Calu3 (cell line): ENCODE measurements at regions of chr11 and their contacts with region 1.

Region 1: GRCh38 chr11:62372871-62373270 is 35.6 kb downstream of the ASRGL1 start:
- DNase-seq: no peak
- H3K4me3 Mint-ChIP-seq: no peak overlapping the region
- H3K27ac Mint-ChIP-seq: no peak overlapping the region
- H3K4me1 Mint-ChIP-seq: no peaks in the 10 kb centered on the region
- H3K27me3 Mint-ChIP-seq: no peaks in the 10 kb centered on the region
- CTCF ChIP-seq: no peak

Region 2: DNA sequence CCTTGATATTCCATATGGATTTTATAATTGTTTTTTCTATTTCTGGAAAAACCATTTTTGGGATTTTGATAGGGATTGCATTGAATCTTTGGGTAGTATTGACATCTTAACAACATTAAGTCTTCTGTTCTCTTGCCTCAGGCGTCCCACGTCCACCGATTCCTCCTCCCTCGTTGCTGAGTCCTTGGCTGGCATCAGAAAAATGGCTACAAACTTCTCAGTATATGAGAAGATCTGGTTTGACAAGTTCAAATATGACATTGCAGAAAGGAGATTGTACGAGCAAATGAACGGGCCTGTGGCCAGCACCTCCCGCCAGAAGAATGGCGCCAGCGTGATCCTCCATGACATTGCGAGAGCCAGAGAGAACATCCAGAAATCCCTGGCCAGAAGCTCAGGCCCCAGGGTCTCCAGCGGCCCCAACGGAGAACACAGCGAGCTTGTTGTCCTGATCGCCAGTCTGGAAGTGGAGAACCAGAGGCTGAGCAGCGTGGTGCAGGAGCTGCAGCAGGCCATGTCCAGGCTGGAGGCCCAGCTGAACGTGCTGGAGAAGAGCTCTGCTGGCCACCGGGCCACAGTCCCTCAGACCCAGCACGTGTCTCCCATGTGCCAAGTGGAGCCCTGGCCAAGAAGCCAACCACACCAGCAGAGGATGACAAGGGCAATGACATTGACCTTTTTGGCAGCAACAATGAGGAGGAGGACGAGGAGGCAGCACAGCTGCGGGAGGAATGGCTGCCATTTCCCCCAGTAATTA is 203.6 kb before region 1 on chr11:
- CTCF ChIA-PET with region 1: no interaction called
- intact Hi-C with region 1: loop called (anchors 1 kb)
- DNase-seq: no peak
- H3K4me3 Mint-ChIP-seq: no peak overlapping the region
- H3K27ac Mint-ChIP-seq: no peak overlapping the region
- H3K4me1 Mint-ChIP-seq: peaks cover 13% of the 10 kb centered on the region
- H3K27me3 Mint-ChIP-seq: peaks cover 95% of the 10 kb centered on the region
- CTCF ChIP-seq: no peak

Region 3: DNA sequence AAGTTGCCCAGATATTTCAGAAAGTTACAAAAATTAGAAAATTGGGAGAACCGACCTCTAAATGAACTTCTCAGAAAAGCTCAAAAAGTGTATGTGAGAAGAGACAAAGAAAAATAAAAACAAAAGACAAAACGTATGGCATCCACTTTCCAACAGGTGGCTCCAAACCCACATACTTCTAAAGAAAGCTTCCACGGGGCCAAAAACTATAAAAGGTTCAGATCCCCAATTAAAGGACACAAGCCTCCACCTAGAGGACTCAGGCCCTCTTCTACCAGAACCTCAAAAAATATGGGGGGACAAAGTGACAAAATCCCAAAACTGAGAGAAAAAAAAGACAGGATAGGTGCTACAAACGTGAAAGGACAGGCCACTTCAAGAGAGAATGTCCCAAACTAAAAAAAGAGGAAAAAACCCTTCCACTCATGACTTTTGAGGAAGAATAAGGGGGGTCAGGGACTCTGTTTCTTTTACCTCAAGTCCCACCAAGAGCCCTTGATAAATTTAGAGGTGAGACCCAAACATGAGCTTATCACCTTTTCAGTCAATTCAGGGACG is 155.6 kb before region 1 on chr11:
- CTCF ChIA-PET with region 1: no interaction called
- intact Hi-C with region 1: loop called (anchors 2 kb)
- DNase-seq: peak; percentile 5
- H3K4me3 Mint-ChIP-seq: no peak overlapping the region
- H3K27ac Mint-ChIP-seq: no peak overlapping the region
- H3K4me1 Mint-ChIP-seq: no peaks in the 10 kb centered on the region
- H3K27me3 Mint-ChIP-seq: peaks cover 35% of the 10 kb centered on the region
- CTCF ChIP-seq: peak; percentile 42

Region 4: DNA sequence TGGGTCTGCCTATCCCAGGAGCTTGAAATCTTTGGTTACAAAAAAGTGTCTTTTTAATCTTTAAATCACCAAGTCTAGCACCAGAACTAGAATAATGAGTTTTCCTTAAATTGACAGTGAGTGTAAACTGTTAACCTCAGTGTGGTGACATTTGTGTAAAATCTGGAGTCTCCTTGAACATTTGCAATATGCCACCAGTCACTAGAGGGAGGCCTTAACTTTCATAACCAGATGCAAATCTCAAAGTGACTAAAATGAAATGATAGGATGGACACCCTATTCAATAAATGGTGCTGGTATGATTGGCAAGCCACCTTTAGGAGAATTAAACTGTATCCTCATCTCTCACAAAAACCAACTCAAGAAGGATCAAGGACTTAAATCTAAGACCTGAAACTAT is 139.1 kb before region 1 on chr11:
- CTCF ChIA-PET with region 1: no interaction called
- intact Hi-C with region 1: loop called (anchors 5 kb)
- DNase-seq: no peak
- H3K4me3 Mint-ChIP-seq: no peak overlapping the region
- H3K27ac Mint-ChIP-seq: no peak overlapping the region
- H3K4me1 Mint-ChIP-seq: no peaks in the 10 kb centered on the region
- H3K27me3 Mint-ChIP-seq: peaks cover 92% of the 10 kb centered on the region
- CTCF ChIP-seq: no peak

Region 5: DNA sequence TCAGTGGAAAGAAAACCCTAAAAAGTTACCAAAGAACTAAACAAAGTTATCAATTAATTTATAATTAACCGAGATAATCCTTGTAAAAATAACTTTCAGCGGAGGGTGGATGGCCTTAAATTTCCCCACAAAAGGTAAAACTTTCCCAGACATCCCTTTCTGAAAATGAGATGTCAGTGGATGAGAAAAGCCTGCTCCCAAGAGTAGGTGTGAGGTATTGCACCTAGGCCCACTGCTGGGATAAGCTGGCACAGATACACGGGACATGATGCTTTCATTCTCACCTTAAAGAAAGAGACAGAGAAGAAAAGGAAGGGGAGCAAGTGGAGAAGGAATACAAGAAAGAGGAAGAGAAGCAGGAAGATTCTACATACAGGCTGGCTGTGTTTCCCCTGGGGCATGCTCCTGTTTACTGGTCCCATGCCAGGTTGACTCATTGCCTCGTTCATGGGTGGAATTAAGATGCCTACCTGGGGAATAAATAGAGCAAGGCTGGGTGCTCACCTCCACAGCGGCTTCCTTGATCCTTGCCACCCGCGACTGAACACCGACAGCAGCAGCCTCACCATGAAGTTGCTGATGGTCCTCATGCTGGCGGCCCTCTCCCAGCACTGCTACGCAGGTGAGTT is 103.1 kb before region 1 on chr11 and contains the start of gene SCGB2A2:
- CTCF ChIA-PET with region 1: no interaction called
- intact Hi-C with region 1: no loop called
- DNase-seq: peak; percentile 9
- H3K4me3 Mint-ChIP-seq: no peak within 1 kb of the TSS
- H3K27ac Mint-ChIP-seq: no peak within 1 kb of the TSS
- H3K4me1 Mint-ChIP-seq: peaks cover 8% of the 10 kb centered on the region
- H3K27me3 Mint-ChIP-seq: peaks cover 82% of the 10 kb centered on the region
- CTCF ChIP-seq: peak; percentile 51
- total RNA-seq, gene SCGB2A2: not detected in 2 replicates

Region 6: DNA sequence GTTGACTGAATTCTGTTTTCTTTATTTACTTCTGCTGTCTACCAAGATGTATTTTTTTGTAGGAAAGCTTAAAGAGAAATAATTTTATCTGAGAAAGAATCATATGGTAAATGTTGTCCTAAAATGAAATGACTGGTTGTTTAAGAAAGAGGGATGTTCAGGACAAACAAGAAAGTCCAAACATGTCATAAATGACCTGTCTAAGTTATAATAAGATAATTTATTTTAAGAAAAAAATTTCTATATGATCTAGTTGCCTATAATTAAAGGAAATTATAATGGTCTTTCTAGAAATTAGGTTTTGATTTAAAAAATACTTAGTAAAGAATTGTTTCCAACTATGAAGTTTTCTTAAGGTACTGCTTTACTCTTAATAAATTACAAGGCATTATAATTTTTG is 92.4 kb before region 1 on chr11:
- CTCF ChIA-PET with region 1: no interaction called
- intact Hi-C with region 1: no loop called
- DNase-seq: no peak
- H3K4me3 Mint-ChIP-seq: no peak overlapping the region
- H3K27ac Mint-ChIP-seq: no peak overlapping the region
- H3K4me1 Mint-ChIP-seq: no peaks in the 10 kb centered on the region
- H3K27me3 Mint-ChIP-seq: peaks cover 25% of the 10 kb centered on the region
- CTCF ChIP-seq: no peak

Region 7: DNA sequence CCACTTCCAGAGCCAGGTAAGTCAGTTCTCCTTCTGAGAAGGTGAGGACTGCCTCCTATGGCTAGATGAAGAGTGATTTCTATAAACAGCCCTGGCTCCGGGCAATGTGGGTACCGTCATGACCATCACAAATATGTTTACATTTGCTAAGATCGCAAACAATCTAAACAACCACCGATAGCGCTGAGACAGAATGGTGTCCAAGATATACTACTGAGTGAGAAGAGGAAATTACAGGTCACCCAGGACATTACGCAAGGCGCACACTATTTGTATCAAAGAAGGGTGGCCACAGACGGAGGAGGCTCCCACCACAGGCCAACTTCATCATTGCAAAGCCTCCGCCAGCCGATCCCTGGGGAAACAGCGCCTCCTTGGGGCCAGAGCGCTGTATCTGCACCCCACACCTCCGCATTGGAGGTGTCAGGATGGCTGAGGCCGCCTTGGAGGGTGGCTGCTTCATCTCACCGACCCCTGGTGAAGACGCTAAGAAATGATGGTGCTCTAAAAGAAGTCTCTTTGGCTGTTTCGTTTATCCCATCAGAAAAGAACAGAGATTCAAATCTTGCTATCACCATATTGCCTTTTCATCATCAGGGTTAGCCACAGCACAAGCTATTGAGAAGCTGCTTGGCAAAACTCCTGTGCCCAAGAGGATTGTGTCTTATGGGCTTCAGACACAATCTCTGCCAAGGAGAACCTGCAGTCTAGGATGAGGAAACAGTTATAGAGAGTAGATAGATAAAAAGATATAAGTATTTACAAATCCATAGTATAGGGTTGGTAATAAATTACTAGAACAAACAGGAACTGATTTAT is 47.9 kb before region 1 on chr11:
- CTCF ChIA-PET with region 1: no interaction called
- intact Hi-C with region 1: no loop called
- DNase-seq: no peak
- H3K4me3 Mint-ChIP-seq: no peak overlapping the region
- H3K27ac Mint-ChIP-seq: no peak overlapping the region
- H3K4me1 Mint-ChIP-seq: peaks cover 22% of the 10 kb centered on the region
- H3K27me3 Mint-ChIP-seq: no peaks in the 10 kb centered on the region
- CTCF ChIP-seq: peak; percentile 20

Region 8: DNA sequence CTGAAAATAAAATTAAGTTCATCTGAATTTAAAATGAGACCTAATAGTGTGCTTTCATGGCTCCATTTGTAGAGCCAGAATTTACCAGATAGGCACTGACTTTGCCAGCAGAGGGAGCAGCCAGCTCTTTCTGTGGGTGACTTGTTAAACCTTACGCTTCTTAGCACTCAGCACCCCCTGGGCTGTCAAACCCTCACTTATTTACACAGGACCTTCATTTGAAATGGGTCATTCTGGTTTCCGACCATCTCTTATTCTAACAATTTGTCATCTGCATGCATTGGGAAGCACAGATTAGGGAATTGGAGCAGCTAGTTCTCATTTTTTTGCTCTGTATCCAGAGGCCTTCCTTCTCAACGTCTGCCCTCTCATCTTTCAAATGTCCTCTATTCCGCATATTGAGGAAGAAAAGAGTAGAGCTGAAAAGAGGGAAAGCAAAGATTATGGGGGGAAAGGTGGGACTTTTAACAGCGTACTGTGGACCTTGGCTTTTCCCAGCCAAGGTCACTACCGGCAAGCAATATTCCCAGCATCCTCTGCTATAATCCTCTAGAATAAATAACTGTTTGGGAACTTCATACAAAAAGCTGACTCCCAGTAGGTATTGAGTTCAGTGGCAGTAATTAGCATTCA is 32.5 kb before region 1 on chr11:
- CTCF ChIA-PET with region 1: no interaction called
- intact Hi-C with region 1: loop called (anchors 5 kb)
- DNase-seq: peak; percentile 43
- H3K4me3 Mint-ChIP-seq: no peak overlapping the region
- H3K27ac Mint-ChIP-seq: no peak overlapping the region
- H3K4me1 Mint-ChIP-seq: peaks cover 26% of the 10 kb centered on the region
- H3K27me3 Mint-ChIP-seq: peaks cover 12% of the 10 kb centered on the region
- CTCF ChIP-seq: peak; percentile 47

Region 9: GRCh38 chr11:62444236-62444833 is 71.5 kb after region 1 on chr11:
- CTCF ChIA-PET with region 1: no interaction called
- intact Hi-C with region 1: no loop called
- DNase-seq: no peak
- H3K4me3 Mint-ChIP-seq: no peak overlapping the region
- H3K27ac Mint-ChIP-seq: no peak overlapping the region
- H3K4me1 Mint-ChIP-seq: peaks cover 7% of the 10 kb centered on the region
- H3K27me3 Mint-ChIP-seq: peaks cover 9% of the 10 kb centered on the region
- CTCF ChIP-seq: no peak